Activated T-helper 1 cell treated with anti-CD3 and anti-CD28 coated beads, Interleukin-12 subunit alpha, Interleukin-12 subunit beta, Interleukin-2, Interleukin-4 antibody, amounts not matched to agents 30 ng/mL and 10 ng/mL and 1 ng/mL, durations not matched to agents 14 hours and 24 hours and 36 hours (primary cell): ENCODE measurements at regions of chr7 and their contacts with region 1.

Region 1: DNA sequence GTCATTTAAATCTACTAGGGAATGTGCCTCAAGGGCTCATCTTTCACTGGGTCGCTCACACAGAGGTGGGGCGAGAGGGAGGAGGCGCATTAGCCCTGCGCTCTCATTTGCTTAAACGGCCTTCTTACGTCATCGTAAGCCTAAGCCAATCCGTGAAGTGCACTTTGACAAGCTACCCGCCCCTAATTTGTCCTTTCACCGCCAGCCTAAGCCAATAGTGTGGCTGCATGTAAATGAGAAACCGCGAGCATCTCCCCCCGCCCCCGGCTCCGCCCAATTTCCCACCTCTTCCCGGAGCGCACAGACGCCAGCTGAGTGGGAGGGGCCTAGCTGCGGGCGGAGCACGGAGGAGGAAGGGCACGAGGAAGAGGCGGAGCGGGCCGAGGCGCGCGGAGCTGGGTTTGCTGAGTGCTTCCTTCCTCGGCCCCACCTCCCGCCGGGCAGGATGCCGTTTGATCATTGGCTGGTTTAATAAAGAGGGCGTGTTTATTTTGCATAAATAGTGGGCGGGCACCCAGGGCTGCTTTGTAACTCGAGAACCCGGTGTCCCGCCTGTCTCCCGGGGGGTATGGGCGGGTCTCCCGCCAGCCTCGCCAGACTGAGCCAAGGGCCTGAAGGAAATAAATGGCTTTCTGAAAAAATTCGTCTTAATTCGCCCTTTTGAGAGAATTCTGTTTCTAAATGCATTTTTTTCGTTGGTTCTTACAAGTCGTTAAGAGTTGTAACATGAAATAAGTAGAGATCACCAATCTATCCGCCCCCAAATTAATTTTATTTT is 289.5 kb upstream of the NFE2L3 start:
- DNase-seq: peak; percentile 97
- H3K4me3 Mint-ChIP-seq: peak overlapping the region; percentile 83
- H3K27ac Mint-ChIP-seq: peak overlapping the region; percentile 86
- H3K4me1 Mint-ChIP-seq: peaks cover 46% of the 10 kb centered on the region
- H3K27me3 Mint-ChIP-seq: peaks cover 57% of the 10 kb centered on the region

Region 2: GRCh38 chr7:24819916-24820689 is 1042.3 kb before region 1 on chr7:
- intact Hi-C with region 1: loop called (anchors 2 kb)
- DNase-seq: peak; percentile 75
- H3K4me3 Mint-ChIP-seq: peak overlapping the region; percentile 73
- H3K27ac Mint-ChIP-seq: peak overlapping the region; percentile 98
- H3K4me1 Mint-ChIP-seq: peaks cover 54% of the 10 kb centered on the region
- H3K27me3 Mint-ChIP-seq: peaks cover 2% of the 10 kb centered on the region

Region 3: GRCh38 chr7:25851332-25852210 is 10.9 kb before region 1 on chr7:
- intact Hi-C with region 1: loop called (anchors 1 kb)
- DNase-seq: peak; percentile 64
- H3K4me3 Mint-ChIP-seq: peak overlapping the region; percentile 77
- H3K27ac Mint-ChIP-seq: peak overlapping the region; percentile 83
- H3K4me1 Mint-ChIP-seq: peaks cover 17% of the 10 kb centered on the region
- H3K27me3 Mint-ChIP-seq: peaks cover 35% of the 10 kb centered on the region

Region 4: DNA sequence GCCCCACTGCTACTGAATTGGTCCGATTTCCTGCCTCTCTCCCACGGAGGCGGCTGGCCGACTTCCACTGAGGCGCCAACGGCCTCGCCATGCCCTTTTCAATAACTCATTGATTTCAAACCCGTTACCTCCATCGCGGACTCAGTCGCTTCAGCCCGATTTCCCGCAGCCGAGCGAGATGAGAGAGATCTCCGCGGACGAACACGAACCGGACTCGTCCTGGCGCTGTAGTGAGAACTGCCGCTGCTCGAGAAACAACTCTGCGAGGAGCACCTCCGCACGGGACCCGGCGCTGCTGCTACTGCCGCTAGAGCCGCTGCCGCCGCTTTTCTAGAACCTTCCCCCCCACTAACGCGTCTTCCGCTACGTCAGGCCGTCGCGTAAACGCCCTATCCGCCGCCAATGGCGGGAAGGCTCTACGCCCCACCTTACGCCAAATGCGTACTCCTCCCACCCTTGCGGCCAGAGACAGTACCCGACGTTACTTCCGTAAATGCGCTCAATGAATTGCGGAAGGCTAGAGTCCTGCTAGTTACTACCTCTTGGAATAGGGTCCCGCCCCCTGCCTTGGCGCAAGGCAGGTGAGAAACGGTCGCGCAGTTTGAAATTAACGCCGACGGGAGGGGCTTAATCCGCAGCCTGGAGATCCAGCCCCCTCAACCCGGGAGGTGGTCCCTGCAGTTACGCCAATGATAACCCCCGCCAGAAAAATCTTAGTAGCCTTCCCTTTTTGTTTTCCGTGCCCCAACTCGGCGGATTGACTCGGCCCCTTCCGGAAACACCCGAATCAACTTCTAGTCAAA is 338.2 kb after region 1 on chr7 and contains the start of gene HNRNPA2B1:
- intact Hi-C with region 1: loop called (anchors 1 kb)
- DNase-seq: peak; percentile 97
- H3K4me3 Mint-ChIP-seq: peak within 1 kb of the TSS; percentile 100
- H3K27ac Mint-ChIP-seq: peak within 1 kb of the TSS; percentile 100
- H3K4me1 Mint-ChIP-seq: peaks cover 47% of the 10 kb centered on the region
- H3K27me3 Mint-ChIP-seq: no peaks in the 10 kb centered on the region
- total RNA-seq, gene HNRNPA2B1: 821 and 823 TPM in 2 replicates

Region 5: DNA sequence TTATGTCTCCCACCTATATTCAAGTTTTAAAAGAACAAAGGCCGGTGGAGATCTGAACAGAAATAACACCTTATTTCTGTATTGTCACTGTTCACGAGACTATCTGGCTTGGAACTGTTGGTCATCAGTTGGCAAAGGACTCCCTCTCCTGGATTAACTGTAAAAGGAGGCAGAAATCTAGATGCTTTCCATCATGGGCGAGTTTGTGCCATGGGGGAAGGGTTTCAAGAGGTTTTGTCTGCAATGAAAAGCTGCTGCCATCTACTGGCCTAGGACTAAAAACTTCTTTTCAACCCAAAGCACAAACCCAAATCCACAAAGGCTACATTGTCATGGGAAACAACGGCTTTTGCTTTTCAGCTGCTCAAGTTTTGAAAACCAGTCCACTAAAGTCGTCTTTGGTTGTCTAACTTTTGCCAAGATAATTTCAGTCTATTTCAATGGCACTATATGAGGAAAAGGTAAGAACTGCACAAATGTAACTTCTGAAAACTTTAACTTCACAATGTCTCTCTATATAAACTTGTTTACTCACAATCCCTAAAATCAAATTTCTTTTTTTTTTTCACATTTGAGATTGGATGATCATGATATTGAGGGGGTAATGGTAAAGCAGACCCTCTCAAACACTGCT is 805.2 kb after region 1 on chr7:
- intact Hi-C with region 1: loop called (anchors 10 kb)
- DNase-seq: peak; percentile 47
- H3K4me3 Mint-ChIP-seq: no peak overlapping the region
- H3K27ac Mint-ChIP-seq: no peak overlapping the region
- H3K4me1 Mint-ChIP-seq: peaks cover 16% of the 10 kb centered on the region
- H3K27me3 Mint-ChIP-seq: peaks cover 39% of the 10 kb centered on the region

Region 6: DNA sequence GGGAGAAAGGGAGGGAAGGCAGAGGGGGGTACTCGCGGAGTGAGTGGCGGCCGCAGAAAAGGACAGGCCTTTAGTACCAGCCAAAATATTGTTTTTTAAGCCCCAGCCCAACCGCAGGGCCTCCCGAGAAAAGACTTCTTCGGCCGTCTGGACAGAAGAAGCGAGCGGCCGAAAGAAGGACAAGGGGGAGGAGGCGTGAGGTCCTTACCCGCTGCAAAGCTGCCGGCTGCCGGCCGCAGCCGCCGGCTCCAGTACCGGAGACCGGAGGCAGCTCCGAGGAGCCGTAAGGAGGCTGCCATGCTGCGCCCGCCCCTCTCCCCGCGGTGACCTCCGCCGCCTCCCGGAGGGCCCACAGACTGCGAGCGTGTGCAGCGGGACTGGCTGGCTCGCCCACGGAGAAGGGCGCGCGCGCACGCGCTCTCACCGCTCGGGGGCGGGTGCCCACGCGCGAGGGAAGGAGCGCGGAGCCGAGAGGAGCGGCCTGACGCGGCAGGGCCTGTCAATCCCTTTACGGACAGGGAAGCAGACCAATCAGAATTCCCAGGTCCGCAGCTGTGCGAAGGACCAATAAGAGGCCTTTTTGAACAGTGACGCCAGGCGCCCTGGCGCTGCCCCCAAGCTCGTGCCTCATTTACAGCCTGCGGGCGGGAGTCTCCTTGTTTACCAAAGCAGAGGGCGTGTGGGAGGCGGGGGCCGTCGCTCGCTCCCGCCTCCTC is 1800.2 kb after region 1 on chr7 and contains the start of gene HIBADH:
- intact Hi-C with region 1: loop called (anchors 2 kb)
- DNase-seq: peak; percentile 96
- H3K4me3 Mint-ChIP-seq: peak within 1 kb of the TSS; percentile 86
- H3K27ac Mint-ChIP-seq: peak within 1 kb of the TSS; percentile 81
- H3K4me1 Mint-ChIP-seq: peaks cover 30% of the 10 kb centered on the region
- H3K27me3 Mint-ChIP-seq: no peaks in the 10 kb centered on the region
- total RNA-seq, gene HIBADH: 21.0 and 21.2 TPM in 2 replicates